Naive thymus-derived CD4-positive, alpha-beta T cell (primary cell): ENCODE measurements at regions of chr5 and their contacts with region 1.

Region 1: DNA sequence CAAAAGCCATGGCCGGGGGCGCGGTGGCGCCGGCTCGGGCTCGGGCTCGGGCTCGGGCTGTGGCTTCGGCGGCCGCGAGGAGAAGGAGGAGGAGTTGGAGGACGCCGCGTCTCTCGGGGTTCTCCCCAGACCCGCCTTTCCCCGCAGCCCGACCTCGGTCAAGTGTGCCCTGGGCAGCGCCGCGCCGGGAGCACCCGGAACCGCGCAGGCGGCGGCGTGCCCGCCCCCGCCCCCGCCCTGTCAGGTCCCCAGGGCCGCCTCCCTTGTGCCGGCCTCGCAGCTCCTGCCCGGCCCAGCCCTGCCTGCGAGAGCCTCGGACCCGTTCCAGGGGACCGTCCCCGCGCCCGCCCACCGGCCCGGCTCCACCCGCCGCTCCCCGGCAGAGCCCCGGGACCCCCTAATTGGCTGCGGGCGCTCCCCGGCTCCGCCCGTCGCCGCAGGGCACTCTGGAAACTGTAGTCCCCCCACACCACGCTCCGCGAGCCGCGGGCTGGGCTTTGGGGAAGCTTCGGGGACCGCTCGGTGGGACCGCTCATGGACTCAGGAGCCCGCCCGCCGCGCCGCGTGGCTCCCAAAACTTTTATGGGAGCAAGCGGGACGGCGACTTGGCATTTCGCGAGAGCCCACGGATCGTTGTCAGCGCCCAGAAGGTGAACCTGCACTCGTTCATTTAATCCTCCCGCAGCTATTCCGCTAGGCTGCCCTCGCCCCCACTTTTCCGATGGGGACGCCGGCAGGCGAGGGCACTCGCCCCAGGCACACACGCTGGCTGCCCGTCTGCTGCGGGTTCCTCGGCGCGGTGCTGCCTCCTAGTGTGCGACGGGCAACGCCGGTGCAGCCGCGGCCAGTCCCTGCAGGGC is at the start of gene STK10:
- DNase-seq: peak; percentile 82 to 92 (median 90)
- ATAC-seq: peak; percentile 86
- H3K4me3 ChIP-seq: peak within 1 kb of the TSS; percentile 89
- H3K4me3 Mint-ChIP-seq: peak within 1 kb of the TSS; percentile 96 to 100 (median 99)
- H3K27ac ChIP-seq: peak within 1 kb of the TSS; percentile 94
- H3K27ac Mint-ChIP-seq: peak within 1 kb of the TSS; percentile 91 to 100 (median 97)
- H3K4me1 ChIP-seq: peaks cover 12 to 15% of the 10 kb centered on the region in 2 donors
- H3K4me1 Mint-ChIP-seq: peaks cover 11 to 35% (median 25%) of the 10 kb centered on the region in 7 donors
- H3K27me3 ChIP-seq: no peaks in the 10 kb centered on the region
- H3K27me3 Mint-ChIP-seq: peaks cover 0 to 11% (median 0%) of the 10 kb centered on the region in 5 donors
- total RNA-seq, gene STK10: 244 to 474 (median 311) TPM

Region 2: DNA sequence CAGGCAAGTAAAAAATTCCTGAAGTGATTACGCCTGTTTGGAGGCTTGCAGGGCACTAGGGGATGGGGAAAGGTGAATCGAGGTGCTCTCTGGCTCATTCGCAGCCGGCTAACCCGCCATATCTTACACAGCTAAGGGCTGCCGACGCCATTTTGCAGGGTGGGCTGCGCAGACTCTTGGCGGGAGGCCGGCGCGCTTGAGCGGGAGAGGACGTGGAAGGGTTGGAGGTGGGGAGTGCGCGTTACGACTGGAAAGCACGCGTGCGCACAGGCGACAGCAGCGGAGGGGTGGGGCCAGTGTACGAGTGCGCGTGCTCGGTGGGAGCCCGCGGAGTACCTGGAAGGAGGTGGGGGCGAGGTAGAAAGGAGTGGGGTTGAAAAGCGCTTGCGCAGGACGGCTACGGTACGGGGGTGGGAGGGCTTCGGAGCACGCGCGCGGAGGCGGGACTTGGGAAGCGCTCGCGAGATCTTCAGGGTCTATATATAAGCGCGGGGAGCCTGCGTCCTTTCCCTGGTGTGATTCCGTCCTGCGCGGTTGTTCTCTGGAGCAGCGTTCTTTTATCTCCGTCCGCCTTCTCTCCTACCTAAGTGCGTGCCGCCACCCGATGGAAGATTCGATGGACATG is 800.8 kb before region 1 on chr5 and contains the start of gene NPM1:
- CTCF ChIA-PET with region 1: no interaction called
- POLR2A ChIA-PET with region 1: no interaction called
- intact Hi-C with region 1: loop called (anchors 1 to 5 kb)
- DNase-seq: peak; percentile 90 to 99 (median 98)
- ATAC-seq: peak; percentile 93
- H3K4me3 ChIP-seq: peak within 1 kb of the TSS; percentile 91
- H3K4me3 Mint-ChIP-seq: peak within 1 kb of the TSS; percentile 92 to 99 (median 98)
- H3K27ac ChIP-seq: peak within 1 kb of the TSS; percentile 88
- H3K27ac Mint-ChIP-seq: peak within 1 kb of the TSS; percentile 96 to 100 (median 98)
- H3K4me1 ChIP-seq: peaks cover 31 to 40% of the 10 kb centered on the region in 2 donors
- H3K4me1 Mint-ChIP-seq: peaks cover 25 to 52% (median 49%) of the 10 kb centered on the region in 7 donors
- H3K27me3 ChIP-seq: no peaks in the 10 kb centered on the region
- H3K27me3 Mint-ChIP-seq: peaks cover 0 to 6% (median 0%) of the 10 kb centered on the region in 5 donors
- total RNA-seq, gene NPM1: 807 to 1,238 (median 1,192) TPM

Region 3: GRCh38 chr5:172059661-172060100 is 128.6 kb before region 1 on chr5:
- CTCF ChIA-PET with region 1: interaction called, 11 read pairs
- POLR2A ChIA-PET with region 1: interaction called, 35 read pairs
- intact Hi-C with region 1: no loop called
- DNase-seq: peak in 1 of 9 donors; percentile 36
- ATAC-seq: no peak
- H3K4me3 ChIP-seq: no peak overlapping the region
- H3K4me3 Mint-ChIP-seq: peak overlapping the region in 4 of 10 donors; percentile 4 to 42 (median 12)
- H3K27ac ChIP-seq: no peak overlapping the region
- H3K27ac Mint-ChIP-seq: peak overlapping the region; percentile 3 to 91 (median 54)
- H3K4me1 ChIP-seq: peaks cover 0 to 7% of the 10 kb centered on the region in 2 donors
- H3K4me1 Mint-ChIP-seq: peaks cover 22 to 68% (median 33%) of the 10 kb centered on the region in 7 donors
- H3K27me3 ChIP-seq: no peaks in the 10 kb centered on the region
- H3K27me3 Mint-ChIP-seq: no peaks in the 10 kb centered on the region

Region 4: GRCh38 chr5:172114875-172115422 is 73.3 kb before region 1 on chr5:
- CTCF ChIA-PET with region 1: interaction called, 43 read pairs
- POLR2A ChIA-PET with region 1: interaction called, 71 read pairs
- intact Hi-C with region 1: loop called (anchors 1 kb)
- DNase-seq: peak; percentile 35 to 78 (median 44)
- ATAC-seq: peak; percentile 70
- H3K4me3 ChIP-seq: peak overlapping the region; percentile 50
- H3K4me3 Mint-ChIP-seq: peak overlapping the region; percentile 54 to 90 (median 80)
- H3K27ac ChIP-seq: peak overlapping the region; percentile 70
- H3K27ac Mint-ChIP-seq: peak overlapping the region; percentile 75 to 98 (median 94)
- H3K4me1 ChIP-seq: peaks cover 67 to 80% of the 10 kb centered on the region in 2 donors
- H3K4me1 Mint-ChIP-seq: peaks cover 48 to 86% (median 72%) of the 10 kb centered on the region in 7 donors
- H3K27me3 ChIP-seq: no peaks in the 10 kb centered on the region
- H3K27me3 Mint-ChIP-seq: no peaks in the 10 kb centered on the region

Region 5: DNA sequence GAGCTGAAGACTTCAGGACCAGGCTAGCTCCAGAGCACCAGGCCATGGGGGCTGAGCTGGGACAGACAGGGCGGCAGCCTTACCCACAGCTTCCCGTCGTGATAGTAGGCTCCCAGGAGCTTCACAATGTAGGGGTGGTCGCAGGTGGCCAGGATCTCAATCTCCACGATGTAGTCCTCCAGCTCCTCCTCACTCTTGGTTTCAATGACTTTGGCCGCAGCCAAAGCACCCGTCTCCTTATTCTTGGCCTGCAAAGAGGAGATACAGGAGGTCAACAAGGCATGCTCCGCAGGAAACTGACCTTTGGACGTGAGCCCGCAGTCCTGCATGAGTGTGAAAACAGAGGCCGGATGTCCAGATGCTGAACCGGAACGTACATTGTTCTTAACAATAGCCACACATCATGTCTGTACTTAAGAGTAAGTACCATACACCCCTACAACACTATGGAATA is 31.7 kb before region 1 on chr5:
- CTCF ChIA-PET with region 1: interaction called, 5 read pairs
- POLR2A ChIA-PET with region 1: interaction called, 12 read pairs
- intact Hi-C with region 1: loop called in 1 of 2 experiments (anchors 2 kb)
- DNase-seq: no peak
- ATAC-seq: no peak
- H3K4me3 ChIP-seq: no peak overlapping the region
- H3K4me3 Mint-ChIP-seq: peak overlapping the region in 1 of 10 donors; percentile 8
- H3K27ac ChIP-seq: no peak overlapping the region
- H3K27ac Mint-ChIP-seq: peak overlapping the region in 8 of 9 donors; percentile 20 to 87 (median 75)
- H3K4me1 ChIP-seq: peaks cover 32 to 39% of the 10 kb centered on the region in 2 donors
- H3K4me1 Mint-ChIP-seq: peaks cover 59 to 83% (median 74%) of the 10 kb centered on the region in 7 donors
- H3K27me3 ChIP-seq: no peaks in the 10 kb centered on the region
- H3K27me3 Mint-ChIP-seq: no peaks in the 10 kb centered on the region

Region 6: DNA sequence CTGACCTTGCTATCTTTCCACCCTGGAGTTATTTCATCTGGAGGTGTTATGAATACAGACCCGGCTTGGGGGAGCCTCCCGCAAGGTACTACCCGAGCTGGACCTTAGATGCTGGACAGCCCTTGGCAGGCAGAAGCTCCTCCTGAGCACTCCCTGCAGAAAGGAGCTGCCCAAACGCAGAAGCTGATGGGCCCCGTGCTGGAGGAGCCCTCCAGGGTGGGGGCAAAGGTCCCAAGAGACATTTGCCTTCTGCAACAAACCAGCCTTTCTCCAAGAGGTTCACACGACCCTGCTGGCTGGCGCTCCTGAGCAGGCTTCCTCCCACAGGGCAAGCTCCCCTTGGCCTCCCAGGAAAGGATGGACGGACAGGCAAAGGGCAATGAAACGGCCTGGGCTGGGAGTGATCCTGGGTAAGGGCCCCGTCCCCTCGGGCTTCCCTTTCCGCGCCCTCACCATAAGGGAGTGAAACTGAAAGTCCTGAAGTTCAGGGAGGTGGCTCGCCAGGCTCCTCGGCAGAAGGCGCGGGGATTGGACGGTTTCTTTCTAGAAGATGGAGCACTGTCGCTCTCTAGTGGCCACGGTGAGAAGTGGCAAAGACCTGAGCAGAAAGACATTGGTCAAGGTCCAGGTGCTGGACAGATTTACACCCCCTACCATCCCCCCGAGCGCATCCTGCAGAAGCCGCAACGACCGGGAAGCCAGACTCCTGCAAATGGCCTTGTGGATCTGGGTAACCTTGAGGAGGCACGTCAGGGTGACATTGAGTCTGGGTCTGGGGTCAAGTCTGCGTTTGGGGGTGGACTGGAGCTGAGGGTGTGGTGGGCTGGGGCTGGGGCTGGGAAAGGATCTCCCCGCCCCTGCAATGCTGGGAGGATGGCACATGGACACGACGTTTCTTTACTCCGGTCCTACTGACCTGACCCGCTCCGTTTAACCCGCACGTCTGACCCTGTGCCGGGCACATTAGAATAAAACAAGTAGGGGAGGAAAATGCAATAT is 509.2 kb after region 1 on chr5:
- CTCF ChIA-PET with region 1: no interaction called
- POLR2A ChIA-PET with region 1: no interaction called
- intact Hi-C with region 1: loop called in 1 of 2 experiments (anchors 5 kb)
- DNase-seq: peak; percentile 64 to 85 (median 80)
- ATAC-seq: peak; percentile 98
- H3K4me3 ChIP-seq: peak overlapping the region; percentile 78
- H3K4me3 Mint-ChIP-seq: peak overlapping the region; percentile 77 to 96 (median 94)
- H3K27ac ChIP-seq: peak overlapping the region; percentile 72
- H3K27ac Mint-ChIP-seq: peak overlapping the region; percentile 88 to 98 (median 95)
- H3K4me1 ChIP-seq: peaks cover 5 to 10% of the 10 kb centered on the region in 2 donors
- H3K4me1 Mint-ChIP-seq: peaks cover 0 to 24% (median 20%) of the 10 kb centered on the region in 7 donors
- H3K27me3 ChIP-seq: no peaks in the 10 kb centered on the region
- H3K27me3 Mint-ChIP-seq: peaks cover 6 to 26% (median 15%) of the 10 kb centered on the region in 5 donors

Region 7: GRCh38 chr5:173331956-173332479 is 1143.8 kb after region 1 on chr5:
- CTCF ChIA-PET with region 1: no interaction called
- POLR2A ChIA-PET with region 1: no interaction called
- intact Hi-C with region 1: loop called in 1 of 2 experiments (anchors 10 kb)
- DNase-seq: peak; percentile 29 to 92 (median 59)
- ATAC-seq: peak; percentile 96
- H3K4me3 ChIP-seq: no peak overlapping the region
- H3K4me3 Mint-ChIP-seq: peak overlapping the region in 2 of 10 donors; percentile 10 to 48
- H3K27ac ChIP-seq: no peak overlapping the region
- H3K27ac Mint-ChIP-seq: peak overlapping the region in 1 of 9 donors; percentile 62
- H3K4me1 ChIP-seq: no peaks in the 10 kb centered on the region
- H3K4me1 Mint-ChIP-seq: peaks cover 10 to 33% (median 17%) of the 10 kb centered on the region in 7 donors
- H3K27me3 ChIP-seq: peaks cover 0 to 3% of the 10 kb centered on the region in 2 donors
- H3K27me3 Mint-ChIP-seq: peaks cover 7 to 71% (median 68%) of the 10 kb centered on the region in 5 donors